Activated CD8-positive, alpha-beta memory T cell treated with anti-CD3 and anti-CD28 coated beads, Interleukin-2, amount 10 ng/mL, durations not matched to agents 7 days and 5 days (primary cell): ENCODE measurements at regions of chr1 and their contacts with region 1.

Region 1: DNA sequence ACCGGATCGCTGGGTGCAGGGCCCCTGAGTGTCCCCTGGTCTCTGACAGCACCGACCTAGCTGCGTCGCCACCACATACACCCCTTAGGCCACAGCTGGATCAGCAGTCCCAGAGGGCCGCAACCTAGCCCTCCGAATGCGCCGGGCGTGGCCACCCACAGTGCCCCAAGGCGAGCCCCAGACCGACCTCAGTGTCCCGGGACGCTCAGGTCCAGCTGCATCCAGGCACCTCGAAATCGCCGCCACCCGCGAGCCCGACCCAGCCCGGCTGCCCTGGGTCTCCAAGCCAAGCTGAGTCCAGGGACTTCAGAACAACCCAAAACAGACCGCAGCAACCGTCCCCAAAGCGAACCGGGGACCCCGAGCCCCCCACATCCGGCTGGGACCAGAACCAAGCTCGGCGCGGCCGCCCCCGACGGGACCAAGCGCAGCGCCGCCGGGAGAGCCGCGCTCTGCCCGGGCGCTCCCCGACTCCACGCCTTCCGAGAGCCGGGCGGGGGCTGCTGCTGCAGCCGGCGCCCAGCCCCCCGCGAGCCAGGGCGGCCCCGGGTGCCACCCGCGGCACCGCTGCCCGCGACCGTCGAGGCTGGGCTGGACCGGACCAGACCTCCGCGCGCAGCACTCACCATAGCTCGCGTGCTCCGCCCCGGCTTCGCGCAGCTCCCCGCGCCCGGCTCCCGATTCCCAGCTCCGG is 54.6 kb upstream of the ECE1 start:
- DNase-seq: peak; percentile 57
- ATAC-seq: peak; percentile 24
- H3K4me3 Mint-ChIP-seq: peak overlapping the region; percentile 87
- H3K27ac Mint-ChIP-seq: peak overlapping the region; percentile 93
- H3K4me1 Mint-ChIP-seq: peaks cover 41% of the 10 kb centered on the region
- H3K27me3 Mint-ChIP-seq: no peaks in the 10 kb centered on the region

Region 2: DNA sequence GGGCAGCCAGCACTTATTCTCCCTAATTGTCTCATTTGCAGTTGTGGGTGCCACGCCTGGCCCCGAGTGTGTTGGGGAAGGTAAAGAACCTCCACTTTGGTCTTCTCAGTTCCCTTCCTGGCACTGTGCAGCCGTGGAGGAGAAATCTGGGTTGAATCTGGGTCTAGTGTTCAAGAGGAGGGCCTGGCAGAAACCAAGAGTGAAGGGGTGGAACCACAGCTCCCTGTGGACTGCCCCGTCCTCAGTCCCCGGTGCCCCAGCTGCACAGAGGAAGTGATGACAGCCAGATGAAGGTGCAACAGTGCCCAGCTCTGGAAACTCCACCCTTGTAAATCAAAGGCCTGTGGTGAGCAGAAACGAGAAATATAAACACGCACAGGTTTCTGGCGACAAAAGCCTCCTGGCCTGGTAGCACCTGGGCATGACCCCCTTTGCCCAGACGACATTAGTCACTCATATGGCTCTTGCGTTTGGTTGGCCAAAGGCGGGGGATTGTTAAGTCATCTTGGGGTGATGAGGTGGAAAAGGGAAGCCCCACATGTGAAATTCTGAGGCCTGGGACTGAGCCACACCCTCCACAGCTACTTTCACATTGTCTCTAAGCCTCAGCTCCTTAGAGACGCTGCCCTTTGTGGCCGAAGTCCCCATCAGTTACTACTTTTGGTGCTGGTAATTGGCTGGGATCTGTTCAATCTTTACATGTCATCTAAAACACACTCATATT is 50.5 kb before region 1 on chr1:
- CTCF ChIA-PET with region 1: interaction called, 26 read pairs
- DNase-seq: peak; percentile 90
- ATAC-seq: peak; percentile 67
- H3K4me3 Mint-ChIP-seq: peak overlapping the region; percentile 73
- H3K27ac Mint-ChIP-seq: peak overlapping the region; percentile 98
- H3K4me1 Mint-ChIP-seq: peaks cover 80% of the 10 kb centered on the region
- H3K27me3 Mint-ChIP-seq: no peaks in the 10 kb centered on the region

Region 3: GRCh38 chr1:21334214-21335087 is 10.4 kb before region 1 on chr1:
- CTCF ChIA-PET with region 1: interaction called, 29 read pairs
- DNase-seq: peak; percentile 93
- ATAC-seq: peak; percentile 94
- H3K4me3 Mint-ChIP-seq: peak overlapping the region; percentile 70
- H3K27ac Mint-ChIP-seq: peak overlapping the region; percentile 94
- H3K4me1 Mint-ChIP-seq: peaks cover 81% of the 10 kb centered on the region
- H3K27me3 Mint-ChIP-seq: no peaks in the 10 kb centered on the region